Activated CD8-positive, alpha-beta memory T cell treated with anti-CD3 and anti-CD28 coated beads, Interleukin-2, amount 10 ng/mL, durations not matched to agents 7 days and 5 days (primary cell): ENCODE measurements at regions of chr17 and their contacts with region 1.

Region 1: GRCh38 chr17:8986290-8986689 is 20.8 kb upstream of the PIK3R5 start:
- DNase-seq: no peak
- ATAC-seq: no peak
- H3K4me3 Mint-ChIP-seq: no peak overlapping the region
- H3K27ac Mint-ChIP-seq: no peak overlapping the region
- H3K4me1 Mint-ChIP-seq: peaks cover 13% of the 10 kb centered on the region
- H3K27me3 Mint-ChIP-seq: peaks cover under 1% of the 10 kb centered on the region

Region 2: DNA sequence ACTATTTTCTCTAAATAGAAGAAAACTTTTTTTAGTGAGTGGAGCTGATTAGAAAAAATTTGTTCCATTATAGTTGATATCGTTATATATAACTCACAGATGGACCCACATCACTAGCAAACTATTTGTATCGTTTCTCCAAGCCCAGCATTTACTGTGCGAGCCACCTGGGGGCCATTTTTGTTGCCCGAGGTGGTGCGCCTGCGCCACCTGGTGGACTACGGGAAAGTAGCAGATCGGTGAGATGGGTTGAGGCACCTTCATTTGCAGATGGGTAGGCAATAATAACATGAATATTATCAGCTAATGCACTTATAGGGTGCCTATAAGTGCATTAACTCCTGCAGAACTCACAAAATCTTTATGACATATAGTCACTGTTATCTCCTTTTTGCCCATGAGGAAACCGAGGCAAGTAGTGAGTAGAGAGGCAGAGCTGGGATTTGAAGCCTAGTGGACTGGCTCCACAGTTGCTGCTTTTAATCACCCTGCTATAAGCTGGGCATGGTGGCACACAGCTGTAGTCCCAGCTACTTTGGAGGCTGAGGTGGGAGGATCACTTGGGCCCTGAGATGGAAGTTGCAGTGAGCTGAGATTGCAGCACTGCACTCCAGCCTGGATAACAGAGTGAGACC is 11.8 kb after region 1 on chr17:
- CTCF ChIA-PET with region 1: interaction called, 10 read pairs
- DNase-seq: peak; percentile 83
- ATAC-seq: peak; percentile 72
- H3K4me3 Mint-ChIP-seq: no peak overlapping the region
- H3K27ac Mint-ChIP-seq: no peak overlapping the region
- H3K4me1 Mint-ChIP-seq: peaks cover 7% of the 10 kb centered on the region
- H3K27me3 Mint-ChIP-seq: peaks cover 38% of the 10 kb centered on the region